Activated CD8-positive, alpha-beta T cell treated with anti-CD3 and anti-CD28 coated beads, Interleukin-2, amount 10 ng/mL, durations not matched to agents 7 days and 5 days (primary cell): ENCODE measurements at regions of chr6 and their contacts with region 1.

Region 1: DNA sequence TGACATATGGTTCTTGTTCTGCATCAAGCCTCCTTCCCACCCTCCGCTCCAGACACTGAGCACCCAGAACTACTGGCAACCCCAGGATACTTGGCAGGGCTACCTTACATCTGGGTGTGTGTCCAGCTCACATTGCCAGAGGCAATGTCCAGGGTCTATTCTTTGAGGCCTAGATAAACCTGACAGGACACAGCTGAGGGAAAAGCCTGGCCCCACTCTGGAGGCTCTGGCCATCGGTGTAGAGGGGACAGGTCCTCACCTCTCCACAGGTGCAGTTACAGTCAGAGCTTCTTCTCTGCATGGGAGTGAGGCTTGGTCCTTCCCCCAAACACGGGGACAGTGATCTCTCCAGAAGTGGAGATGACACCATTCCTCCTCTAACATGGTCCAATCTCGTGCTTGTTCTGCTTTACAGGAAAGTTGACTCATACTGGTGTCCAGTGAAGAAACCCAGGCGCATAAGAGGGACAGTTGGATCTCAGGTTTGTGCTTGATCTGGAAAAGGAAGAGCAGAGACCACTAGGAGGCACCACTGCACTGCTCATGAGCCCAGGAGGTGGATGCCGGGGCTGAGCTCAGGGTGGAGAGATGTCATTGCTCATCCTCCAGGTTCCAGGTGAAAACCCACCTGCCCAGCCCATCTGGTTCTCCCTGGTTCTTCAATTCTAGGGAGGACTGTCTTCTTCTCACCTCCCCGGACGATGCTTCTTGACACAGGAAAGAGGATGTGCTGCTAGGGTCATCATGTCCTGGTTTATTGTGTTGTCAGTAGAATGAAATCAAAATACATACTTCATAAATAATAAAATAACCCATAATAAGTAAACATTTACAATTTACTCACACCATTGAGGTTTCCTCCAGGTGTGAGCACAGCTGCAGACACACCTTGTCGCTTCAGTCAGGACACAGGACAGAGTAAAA is 14.7 kb downstream of the HLA-F start:
- DNase-seq: peak; percentile 80
- ATAC-seq: peak; percentile 90
- H3K4me3 Mint-ChIP-seq: no peak overlapping the region
- H3K27ac Mint-ChIP-seq: no peak overlapping the region
- H3K4me1 Mint-ChIP-seq: peaks cover 18% of the 10 kb centered on the region
- H3K27me3 Mint-ChIP-seq: no peaks in the 10 kb centered on the region

Region 2: GRCh38 chr6:29720863-29721262 is 17.1 kb before region 1 on chr6:
- CTCF ChIA-PET with region 1: interaction called, 29 read pairs
- POLR2A ChIA-PET with region 1: no interaction called
- DNase-seq: no peak
- ATAC-seq: no peak
- H3K4me3 Mint-ChIP-seq: no peak overlapping the region
- H3K27ac Mint-ChIP-seq: no peak overlapping the region
- H3K4me1 Mint-ChIP-seq: peaks cover 36% of the 10 kb centered on the region
- H3K27me3 Mint-ChIP-seq: no peaks in the 10 kb centered on the region

Region 3: DNA sequence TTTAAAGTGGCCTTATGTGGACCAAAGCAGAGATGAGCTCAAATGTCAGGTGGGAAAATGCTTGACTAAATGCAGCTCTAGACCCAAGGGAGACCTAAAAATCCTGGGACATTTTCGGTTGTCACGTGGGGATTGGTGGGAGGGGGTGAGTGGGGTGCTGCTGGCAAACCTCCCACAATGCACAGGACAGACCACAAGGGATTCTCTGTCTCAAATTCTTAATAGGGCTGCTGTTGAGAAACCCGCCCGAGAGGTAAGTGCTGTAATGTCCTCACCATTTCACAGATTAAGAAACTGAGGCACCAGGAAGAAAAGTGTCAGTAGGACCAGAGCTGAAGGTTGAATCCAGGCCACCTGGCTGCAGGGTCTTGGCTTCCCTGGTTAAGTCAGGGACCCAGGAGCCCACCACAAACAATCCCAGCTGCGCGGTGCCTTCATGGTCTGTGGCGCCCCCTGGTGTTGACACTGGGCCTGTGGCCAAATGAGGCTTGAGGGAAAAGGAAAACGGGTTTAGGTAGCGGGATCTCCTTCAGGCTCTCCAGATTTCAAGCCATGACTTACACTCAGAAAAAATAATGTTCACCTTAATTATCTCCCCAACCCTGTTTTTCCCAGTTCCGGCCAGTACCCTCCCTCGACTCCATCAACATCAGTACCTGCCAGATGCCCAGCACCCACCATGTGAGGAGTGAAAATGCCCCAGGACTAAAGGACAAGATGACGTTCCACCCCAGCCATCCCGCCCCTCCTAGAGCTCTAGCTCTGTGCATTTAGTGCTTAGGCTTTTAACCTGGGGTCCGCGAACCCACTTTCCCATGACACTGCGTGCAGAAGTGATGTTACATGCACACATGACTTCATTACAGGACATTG is 96.8 kb after region 1 on chr6:
- CTCF ChIA-PET with region 1: interaction called, 26 read pairs
- POLR2A ChIA-PET with region 1: no interaction called
- DNase-seq: peak; percentile 62
- ATAC-seq: peak; percentile 61
- H3K4me3 Mint-ChIP-seq: no peak overlapping the region
- H3K27ac Mint-ChIP-seq: no peak overlapping the region
- H3K4me1 Mint-ChIP-seq: peaks cover 8% of the 10 kb centered on the region
- H3K27me3 Mint-ChIP-seq: peaks cover 59% of the 10 kb centered on the region